ENCODE measurements at regions of chr10 and their contacts with region 1.

Region 1: DNA sequence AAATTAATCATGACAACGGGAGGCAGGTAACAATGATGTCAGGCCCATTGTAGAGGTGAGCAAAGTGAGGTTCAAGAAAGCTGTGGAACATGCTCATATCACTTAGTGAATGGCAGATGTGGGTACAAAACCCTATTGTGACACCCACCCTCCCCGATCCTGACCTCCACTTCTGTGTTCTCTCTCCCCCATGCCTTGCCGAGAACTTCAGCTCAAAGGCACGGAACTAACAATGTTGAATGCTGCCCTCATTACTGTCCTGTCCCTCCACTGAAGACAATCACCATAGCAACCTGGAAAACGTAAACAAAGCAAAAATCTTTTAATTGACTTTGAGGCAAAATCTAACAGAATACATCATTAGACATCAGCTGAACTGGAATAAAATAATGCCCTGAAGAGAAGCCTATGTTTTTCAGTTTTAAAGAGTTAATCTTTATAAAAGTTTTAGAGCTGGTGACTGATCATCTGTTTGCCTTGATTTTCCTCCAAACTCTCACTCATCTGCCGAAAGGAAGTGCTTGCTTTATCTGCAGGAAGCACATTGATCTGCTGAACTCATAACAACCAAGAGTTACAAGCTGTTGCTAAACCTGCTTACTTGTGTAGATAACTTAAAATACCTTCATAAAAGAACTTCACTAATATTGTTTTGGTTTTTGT is 133.6 kb downstream of the CUBN start:
- ATAC-seq: peak in 7 of 8 experiments; percentile 29 to 79 (median 39)
- H3K4me3 ChIP-seq: no peak overlapping the region
- H3K27ac ChIP-seq: no peak overlapping the region
- H3K4me1 ChIP-seq: peaks cover 4 to 9% of the 10 kb centered on the region in 2 donors

Region 2: GRCh38 chr10:17228091-17228940 is 232.3 kb after region 1 on chr10 and contains the start of gene VIM:
- in situ Hi-C with region 1: loop called in 1 of 9 experiments (anchors 25 kb)
- ATAC-seq: peak; percentile 57 to 75 (median 68)
- H3K4me3 ChIP-seq: peak within 1 kb of the TSS; percentile 56 to 96 (median 79)
- H3K27ac ChIP-seq: peak within 1 kb of the TSS; percentile 88 to 95
- H3K4me1 ChIP-seq: peaks cover 8 to 16% of the 10 kb centered on the region in 2 donors
- total RNA-seq, gene VIM: 509 to 5,662 (median 997) TPM

Measured in motor neuron (in vitro differentiated cells).